Dendritic cell treated with granulocyte-macrophage colony-stimulating factor and Interleukin-4, amounts not matched to agents 40 ng/mL and 50 ng/mL, for 4 days (primary cell): ENCODE measurements at regions of chr6 and their contacts with region 1.

Region 1: DNA sequence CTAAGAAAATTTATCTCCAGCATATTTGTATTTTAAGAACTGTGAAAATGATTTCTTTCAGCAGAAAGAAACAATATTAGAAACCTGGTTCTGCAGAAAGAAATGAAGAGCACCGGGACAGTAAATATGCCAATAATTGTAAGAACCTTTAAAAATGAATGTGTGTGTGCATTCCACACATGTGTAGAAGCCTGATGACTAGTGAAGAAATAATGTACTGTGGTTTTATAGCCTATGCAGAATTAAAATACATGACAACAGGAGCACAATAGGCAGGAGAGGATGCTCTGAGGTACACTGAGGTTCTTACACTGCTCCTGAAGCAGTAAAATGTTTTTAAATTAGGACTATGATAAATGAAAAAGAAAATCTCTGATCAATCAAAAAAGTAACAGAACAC is 48.9 kb downstream of the SNX14 start:
- H3K4me3 Mint-ChIP-seq: no peak overlapping the region
- H3K27ac Mint-ChIP-seq: no peak overlapping the region
- H3K4me1 Mint-ChIP-seq: no peaks in the 10 kb centered on the region
- H3K27me3 Mint-ChIP-seq: no peaks in the 10 kb centered on the region

Region 2: DNA sequence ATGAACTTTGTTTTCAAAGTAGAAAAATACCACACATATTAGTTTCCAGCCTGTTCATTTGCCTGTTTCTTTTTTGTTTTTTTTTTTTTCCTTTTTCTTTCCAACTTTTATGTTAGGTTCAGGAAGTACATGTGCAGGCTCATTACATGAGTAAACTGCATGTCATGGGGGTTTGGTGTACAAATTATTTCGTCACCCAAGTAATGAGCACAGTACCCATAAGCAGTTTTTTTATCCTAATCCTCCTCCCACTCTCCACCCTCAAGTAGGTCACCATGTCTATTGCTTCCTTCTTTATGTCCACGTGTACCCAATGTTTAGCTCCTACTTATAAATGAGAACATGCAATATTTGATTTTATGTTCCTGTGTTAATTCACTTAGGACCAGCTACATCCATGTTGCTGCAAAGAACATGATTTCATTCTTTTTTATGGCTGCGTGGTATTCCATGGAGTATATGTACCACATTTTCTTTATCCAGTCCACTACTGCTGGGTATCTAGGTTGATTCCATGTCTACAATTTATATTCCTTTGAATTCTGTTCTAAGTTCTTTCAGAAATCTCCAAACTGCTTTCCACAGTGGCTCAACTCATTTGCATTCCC is 17.1 kb after region 1 on chr6:
- intact Hi-C with region 1: loop called (anchors 2 kb)
- H3K4me3 Mint-ChIP-seq: no peak overlapping the region
- H3K27ac Mint-ChIP-seq: no peak overlapping the region
- H3K4me1 Mint-ChIP-seq: peaks cover 5% of the 10 kb centered on the region
- H3K27me3 Mint-ChIP-seq: no peaks in the 10 kb centered on the region